ENCODE measurements at regions of chr6 and their contacts with region 1.

Region 1: GRCh38 chr6:8063761-8064637 is at the start of gene BLOC1S5:
- DNase-seq: peak; percentile 93 to 98 (median 96)
- ATAC-seq: peak; percentile 93 to 96
- H3K4me3 Mint-ChIP-seq: peak within 1 kb of the TSS; percentile 89 to 96 (median 95)
- H3K27ac Mint-ChIP-seq: peak within 1 kb of the TSS; percentile 95 to 98 (median 96)
- H3K4me1 Mint-ChIP-seq: peaks cover 10 to 30% (median 18%) of the 10 kb centered on the region in 4 donors
- H3K27me3 Mint-ChIP-seq: no peaks in the 10 kb centered on the region
- polyA plus RNA-seq, gene BLOC1S5: 28.5 to 33.7 (median 32.8) TPM

Region 2: GRCh38 chr6:8102122-8102958 is 38.3 kb after region 1 on chr6 and contains the start of gene EEF1E1:
- POLR2A ChIA-PET with region 1: interaction called, 13 read pairs
- DNase-seq: peak; percentile 85 to 98 (median 95)
- ATAC-seq: peak; percentile 97 to 98
- H3K4me3 Mint-ChIP-seq: peak within 1 kb of the TSS; percentile 90 to 100 (median 98)
- H3K27ac Mint-ChIP-seq: peak within 1 kb of the TSS; percentile 93 to 98 (median 96)
- H3K4me1 Mint-ChIP-seq: peaks cover 18 to 32% (median 28%) of the 10 kb centered on the region in 4 donors
- H3K27me3 Mint-ChIP-seq: peaks cover 4 to 27% (median 16%) of the 10 kb centered on the region in 5 donors
- polyA plus RNA-seq, gene EEF1E1: 55.5 to 62.0 (median 57.9) TPM